Right ventricle myocardium superior (tissue), 1 donor: ENCODE measurements at regions of chr2 and their contacts with region 1.

Region 1: GRCh38 chr2:177164584-177165052 is 48.0 kb upstream of the HNRNPA3 start:
- DNase-seq: peak; percentile 90
- ATAC-seq: peak; percentile 96

Region 2: GRCh38 chr2:175871331-175872004 is 1293.2 kb before region 1 on chr2:
- intact Hi-C with region 1: no loop called
- DNase-seq: no peak
- ATAC-seq: no peak

Region 3: DNA sequence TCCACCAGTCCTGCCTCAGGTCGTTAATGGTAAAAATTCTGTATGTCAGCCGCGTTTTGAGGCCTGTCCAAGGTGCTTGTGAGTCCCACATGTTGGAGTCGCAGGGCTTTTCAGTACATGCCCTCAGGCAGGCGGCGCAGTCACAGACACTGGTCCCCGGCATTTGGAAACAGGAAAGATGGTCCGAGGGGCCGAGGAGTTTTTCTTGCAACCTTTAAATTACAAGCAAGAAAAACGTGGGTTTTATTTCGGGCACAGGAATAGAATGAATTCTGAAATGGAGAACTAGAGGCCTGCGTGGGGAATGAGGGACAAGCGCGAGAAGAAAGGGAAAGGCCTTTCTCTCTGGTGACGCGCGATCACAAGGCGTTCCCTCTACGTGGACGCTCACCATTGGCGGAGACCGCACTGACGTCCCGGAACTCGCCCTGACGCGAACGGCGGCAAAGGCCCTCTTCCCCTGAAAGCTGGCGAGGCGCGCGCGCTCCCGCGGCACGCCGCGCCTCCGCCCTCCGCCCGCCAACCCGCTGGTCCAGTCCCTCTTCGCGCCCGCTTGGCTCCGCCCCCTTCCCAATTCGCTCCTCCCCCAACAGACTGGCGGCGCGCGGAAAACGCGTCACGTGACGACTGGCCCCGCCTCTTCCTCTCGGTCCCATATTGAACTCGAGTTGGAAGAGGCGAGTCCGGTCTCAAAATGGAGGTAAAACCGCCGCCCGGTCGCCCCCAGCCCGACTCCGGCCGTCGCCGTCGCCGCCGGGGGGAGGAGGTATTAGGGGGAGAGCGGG is 47.7 kb after region 1 on chr2 and contains the start of gene HNRNPA3:
- intact Hi-C with region 1: loop called (anchors 2 kb)
- DNase-seq: peak; percentile 100
- ATAC-seq: peak; percentile 95
- total RNA-seq, gene HNRNPA3: 64.5 TPM

Region 4: GRCh38 chr2:177239932-177240630 is 75.5 kb after region 1 on chr2:
- intact Hi-C with region 1: no loop called
- DNase-seq: no peak
- ATAC-seq: peak; percentile 47

Region 5: GRCh38 chr2:177263451-177264208 is 99.0 kb after region 1 on chr2:
- intact Hi-C with region 1: loop called (anchors 2 kb)
- DNase-seq: peak; percentile 99
- ATAC-seq: peak; percentile 79

Region 6: GRCh38 chr2:177296040-177296439 is 131.4 kb after region 1 on chr2:
- intact Hi-C with region 1: loop called (anchors 10 kb)
- DNase-seq: no peak
- ATAC-seq: peak; percentile 58

Region 7: DNA sequence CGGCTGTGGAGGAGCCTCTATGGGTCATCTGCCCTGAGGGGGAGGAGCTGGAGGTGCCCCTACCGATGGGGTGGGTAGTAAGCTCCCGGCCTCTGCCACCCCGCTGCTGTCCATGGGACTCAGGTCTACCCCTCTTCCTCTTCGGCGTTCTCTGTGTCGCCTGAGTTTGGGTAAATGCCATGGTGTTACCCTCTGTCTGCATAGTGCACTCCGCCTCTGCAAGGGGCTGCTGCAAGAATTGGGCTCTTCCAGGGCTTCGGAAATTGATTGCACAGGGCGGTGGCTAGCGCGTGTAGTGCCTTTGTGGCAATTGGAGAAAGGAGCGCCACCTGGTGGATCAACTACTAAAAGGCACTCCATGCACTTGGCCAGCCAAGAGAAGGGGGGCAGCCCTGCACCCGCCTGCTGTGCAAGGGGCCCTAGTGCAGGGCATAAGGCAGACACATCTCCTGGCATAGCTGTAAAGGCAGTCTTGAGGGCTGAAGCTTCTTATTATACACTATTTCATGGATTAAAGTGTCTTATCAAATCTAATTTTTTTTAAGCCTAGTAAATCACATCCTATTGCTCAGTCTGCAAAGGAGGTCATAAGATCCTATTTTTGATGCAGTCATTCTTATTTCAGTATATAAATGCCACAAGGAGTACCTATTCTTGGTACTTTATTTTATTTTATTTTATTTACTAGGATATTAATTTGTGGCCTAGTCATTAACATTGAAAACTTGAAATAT is 599.1 kb after region 1 on chr2:
- intact Hi-C with region 1: loop called (anchors 10 kb)
- DNase-seq: peak; percentile 73
- ATAC-seq: peak; percentile 86